ENCODE measurements at regions of chr17 and their contacts with region 1.

Region 1: DNA sequence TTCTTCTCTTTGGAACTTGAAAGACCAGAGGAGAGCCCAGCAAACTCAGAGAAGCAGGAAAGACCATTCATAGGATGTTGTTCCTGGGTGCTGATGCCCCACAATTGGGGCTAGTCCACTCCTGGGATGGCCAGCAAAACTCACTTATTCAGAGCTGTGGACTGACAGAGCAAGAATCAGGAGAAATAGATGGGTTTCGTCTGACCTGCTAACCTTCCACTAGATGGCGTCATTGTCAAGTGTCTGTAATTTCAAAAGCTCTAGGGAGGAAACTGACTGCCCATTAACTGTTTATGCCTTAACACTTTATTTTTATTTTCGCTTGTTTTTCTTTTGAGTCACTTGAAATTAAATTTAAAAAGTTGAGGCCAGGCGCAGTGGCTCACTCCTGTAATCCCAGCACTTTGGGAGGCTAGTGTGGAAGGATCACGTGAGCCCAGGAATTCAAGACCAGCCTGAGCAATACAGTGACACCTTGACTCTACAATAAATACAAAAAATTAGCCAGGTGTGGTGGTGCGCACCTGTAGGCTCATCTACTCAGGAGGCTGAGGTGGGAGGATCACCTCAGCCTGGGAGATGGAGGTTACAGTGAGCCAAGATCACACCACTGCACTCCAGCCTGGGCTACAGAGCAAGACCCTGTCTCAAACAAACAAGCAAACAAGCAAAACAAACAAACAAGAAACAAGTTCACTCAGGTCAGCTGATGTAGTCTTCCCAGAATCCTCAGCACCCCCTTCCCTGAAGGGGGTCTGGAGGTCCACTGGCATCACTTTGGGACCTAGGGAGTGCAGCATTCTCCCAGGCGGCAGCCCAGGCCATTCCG is 28.6 kb upstream of the MILR1 start:
- DNase-seq: peak; percentile 46
- ATAC-seq: peak; percentile 81
- H3K4me3 Mint-ChIP-seq: no peak overlapping the region
- H3K27ac Mint-ChIP-seq: no peak overlapping the region
- H3K4me1 Mint-ChIP-seq: peaks cover 9% of the 10 kb centered on the region
- H3K27me3 Mint-ChIP-seq: peaks cover 11% of the 10 kb centered on the region

Region 2: DNA sequence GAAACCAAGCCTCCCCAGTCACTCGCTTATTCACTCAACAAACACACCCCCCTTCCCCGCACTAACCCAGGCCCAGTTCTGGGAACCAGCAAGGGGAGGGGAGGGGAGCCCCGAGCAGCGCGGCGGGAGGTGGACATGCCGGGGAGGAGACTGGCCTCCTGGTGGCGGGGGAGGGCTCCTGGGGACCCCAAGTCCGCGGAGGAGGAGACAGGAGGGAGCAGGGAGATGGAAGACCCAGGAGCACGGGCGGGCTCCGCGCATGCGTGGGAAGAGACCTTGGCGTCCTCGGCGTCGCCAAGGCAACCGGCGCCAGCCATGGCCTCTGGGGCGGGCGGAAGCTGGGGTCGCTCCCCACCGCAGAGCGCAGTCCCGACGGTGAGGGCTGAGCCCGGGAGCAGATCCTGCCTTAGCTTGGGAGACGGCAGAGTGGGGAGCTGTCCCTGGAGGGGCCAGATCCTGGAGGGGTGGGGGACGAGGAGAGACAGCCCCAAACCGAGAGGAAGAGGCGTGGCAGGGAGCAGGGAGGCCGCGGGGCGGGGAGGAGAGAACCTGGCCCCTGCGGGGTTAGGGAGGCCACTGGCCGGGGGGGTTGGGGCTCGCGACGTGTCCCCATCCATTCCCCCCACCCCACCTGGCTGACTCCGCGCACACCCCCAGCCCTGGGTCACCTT is 422.2 kb before region 1 on chr17 and contains the start of gene PRR29:
- CTCF ChIA-PET with region 1: no interaction called
- DNase-seq: peak; percentile 86
- ATAC-seq: peak; percentile 84
- H3K4me3 Mint-ChIP-seq: peak within 1 kb of the TSS; percentile 87
- H3K27ac Mint-ChIP-seq: peak within 1 kb of the TSS; percentile 33
- H3K4me1 Mint-ChIP-seq: peaks cover 32% of the 10 kb centered on the region
- H3K27me3 Mint-ChIP-seq: peaks cover 4% of the 10 kb centered on the region
- total RNA-seq, gene PRR29: 1.5 to 3.3 TPM

Region 3: DNA sequence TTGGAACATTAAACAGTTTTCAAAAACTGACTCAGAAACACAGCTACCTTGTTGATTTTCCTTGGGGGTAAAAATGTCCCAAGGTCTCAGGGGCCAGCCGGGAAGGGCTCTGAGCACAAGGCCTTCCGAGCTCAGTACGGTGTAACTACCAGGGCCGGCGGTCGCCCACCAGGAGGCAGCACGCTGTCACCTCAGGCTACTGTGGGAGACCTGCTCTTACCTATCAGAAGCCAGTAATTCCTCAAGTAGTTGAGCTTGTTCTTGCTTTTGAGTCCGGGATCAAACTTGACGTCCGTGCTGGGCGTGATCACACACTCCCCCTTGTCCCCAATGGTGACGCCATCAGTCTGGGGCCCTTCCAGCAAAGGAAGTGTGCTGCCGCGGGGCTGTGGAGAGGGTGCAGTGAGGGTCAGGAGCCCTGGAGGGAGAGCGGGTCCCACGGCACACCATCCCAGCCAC is 356.6 kb before region 1 on chr17:
- CTCF ChIA-PET with region 1: no interaction called
- DNase-seq: peak; percentile 54
- ATAC-seq: peak; percentile 54
- H3K4me3 Mint-ChIP-seq: no peak overlapping the region
- H3K27ac Mint-ChIP-seq: no peak overlapping the region
- H3K4me1 Mint-ChIP-seq: peaks cover 28% of the 10 kb centered on the region
- H3K27me3 Mint-ChIP-seq: no peaks in the 10 kb centered on the region

Region 4: GRCh38 chr17:64343853-64344637 is 76.3 kb before region 1 on chr17:
- CTCF ChIA-PET with region 1: interaction called, 11 read pairs
- DNase-seq: no peak
- ATAC-seq: no peak
- H3K4me3 Mint-ChIP-seq: no peak overlapping the region
- H3K27ac Mint-ChIP-seq: no peak overlapping the region
- H3K4me1 Mint-ChIP-seq: peaks cover 8% of the 10 kb centered on the region
- H3K27me3 Mint-ChIP-seq: no peaks in the 10 kb centered on the region

Region 5: GRCh38 chr17:64431534-64431933 is 11.2 kb after region 1 on chr17:
- CTCF ChIA-PET with region 1: interaction called, 19 read pairs
- DNase-seq: no peak
- ATAC-seq: no peak
- H3K4me3 Mint-ChIP-seq: no peak overlapping the region
- H3K27ac Mint-ChIP-seq: no peak overlapping the region
- H3K4me1 Mint-ChIP-seq: no peaks in the 10 kb centered on the region
- H3K27me3 Mint-ChIP-seq: peaks cover 14% of the 10 kb centered on the region

Region 6: DNA sequence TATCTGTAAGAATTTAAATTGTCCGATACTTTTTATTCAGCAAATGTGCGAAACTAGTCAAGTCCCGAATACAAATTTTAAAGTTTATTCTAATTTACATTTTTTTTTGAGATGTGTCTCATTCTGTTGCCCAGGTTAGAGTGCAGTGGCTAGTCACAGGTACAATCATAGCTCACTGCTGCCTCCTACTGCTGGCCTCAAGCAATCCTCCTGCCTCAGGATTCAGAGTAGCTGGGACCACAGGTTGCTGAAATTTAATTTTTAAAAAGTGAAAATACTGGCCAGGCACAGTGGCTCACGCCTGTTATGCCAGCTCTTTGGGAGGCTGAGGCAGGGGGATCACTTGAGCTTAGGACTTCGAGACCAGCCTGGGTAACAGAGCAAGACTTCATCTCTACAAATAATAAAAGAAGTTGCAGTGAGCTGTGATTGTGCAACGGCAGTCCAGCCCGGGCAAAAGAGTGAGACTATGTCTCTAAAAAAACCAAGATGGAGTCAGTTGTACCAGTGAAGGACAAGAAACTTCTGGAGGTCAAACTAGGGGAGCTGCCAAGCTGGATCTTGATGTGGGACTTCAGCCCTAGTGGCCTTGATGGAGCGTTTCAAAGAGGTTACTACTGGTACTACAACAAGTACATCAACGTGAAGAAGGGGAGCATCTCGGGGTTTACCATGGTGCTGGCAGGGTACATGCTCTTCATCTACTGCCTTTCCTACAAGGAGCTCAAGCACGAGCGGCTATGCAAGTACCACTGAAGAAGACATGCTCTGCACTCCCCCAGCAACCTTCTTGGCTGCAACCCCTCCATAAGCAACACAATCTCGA is 70.9 kb after region 1 on chr17:
- CTCF ChIA-PET with region 1: interaction called, 308 read pairs
- DNase-seq: peak; percentile 76
- ATAC-seq: peak; percentile 55
- H3K4me3 Mint-ChIP-seq: no peak overlapping the region
- H3K27ac Mint-ChIP-seq: no peak overlapping the region
- H3K4me1 Mint-ChIP-seq: peaks cover 34% of the 10 kb centered on the region
- H3K27me3 Mint-ChIP-seq: no peaks in the 10 kb centered on the region

Region 7: GRCh38 chr17:64534175-64534574 is 113.8 kb after region 1 on chr17:
- CTCF ChIA-PET with region 1: interaction called, 12 read pairs
- DNase-seq: no peak
- ATAC-seq: no peak
- H3K4me3 Mint-ChIP-seq: no peak overlapping the region
- H3K27ac Mint-ChIP-seq: no peak overlapping the region
- H3K4me1 Mint-ChIP-seq: no peaks in the 10 kb centered on the region
- H3K27me3 Mint-ChIP-seq: no peaks in the 10 kb centered on the region

Region 8: DNA sequence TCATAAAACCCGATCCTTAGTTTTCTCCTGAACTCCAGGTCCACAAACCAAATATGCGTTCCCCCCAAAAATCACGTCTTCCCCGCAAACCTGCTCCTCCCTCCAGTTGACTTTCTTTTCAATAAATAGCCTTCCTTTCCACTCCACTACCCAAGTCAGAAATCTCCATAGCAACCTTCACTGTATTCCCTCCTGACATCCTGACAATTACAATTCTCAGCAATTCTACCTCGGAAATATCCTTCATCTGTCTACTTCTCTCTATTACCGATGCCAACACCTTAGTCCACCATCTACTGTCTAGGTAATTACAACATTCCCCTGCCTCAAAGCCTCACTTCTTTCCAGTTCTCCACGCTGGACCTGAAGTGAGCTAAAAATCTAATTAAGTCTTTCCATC is 191.0 kb after region 1 on chr17:
- CTCF ChIA-PET with region 1: no interaction called
- DNase-seq: no peak
- ATAC-seq: no peak
- H3K4me3 Mint-ChIP-seq: no peak overlapping the region
- H3K27ac Mint-ChIP-seq: no peak overlapping the region
- H3K4me1 Mint-ChIP-seq: peaks cover 14% of the 10 kb centered on the region
- H3K27me3 Mint-ChIP-seq: no peaks in the 10 kb centered on the region

Region 9: DNA sequence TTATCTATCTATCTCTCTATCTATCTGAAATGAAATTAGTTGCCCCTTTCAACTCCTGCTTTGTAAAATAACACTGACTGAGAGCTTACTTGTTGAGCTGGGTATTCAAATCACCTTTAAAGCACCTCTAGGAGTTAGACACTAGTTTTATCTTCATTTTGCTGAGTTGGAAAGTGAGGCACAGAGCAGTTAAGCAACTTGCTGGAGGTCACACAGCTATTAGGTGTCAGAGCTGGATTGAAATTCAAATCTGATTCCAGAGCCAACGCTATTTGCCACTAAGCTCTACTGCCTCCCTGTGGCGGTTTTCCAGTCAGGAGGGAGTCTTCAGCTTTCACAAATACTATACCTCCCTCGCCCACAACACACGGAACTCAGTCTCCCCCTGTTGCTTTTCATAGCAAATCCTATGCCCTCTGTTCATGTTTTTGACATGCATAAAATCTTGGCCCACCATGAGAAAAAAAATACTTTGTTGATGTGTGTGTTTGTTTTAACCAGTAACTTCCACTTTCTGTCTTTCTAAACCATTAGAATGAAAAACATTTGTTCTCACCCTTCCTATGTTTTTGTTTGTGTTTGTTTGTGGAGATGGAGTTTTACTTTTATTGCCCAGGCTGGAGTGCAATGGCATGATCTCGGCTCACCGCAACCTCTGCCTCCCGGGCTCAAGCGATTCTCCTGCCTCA is 316.6 kb after region 1 on chr17:
- CTCF ChIA-PET with region 1: interaction called, 14 read pairs
- DNase-seq: peak; percentile 80
- ATAC-seq: peak; percentile 90
- H3K4me3 Mint-ChIP-seq: no peak overlapping the region
- H3K27ac Mint-ChIP-seq: no peak overlapping the region
- H3K4me1 Mint-ChIP-seq: peaks cover 17% of the 10 kb centered on the region
- H3K27me3 Mint-ChIP-seq: no peaks in the 10 kb centered on the region

Measured in activated CD8-positive, alpha-beta memory T cell treated with anti-CD3 and anti-CD28 coated beads, Interleukin-2, amount 10 ng/mL, durations not matched to agents 7 days and 5 days (primary cell).